ENCODE measurements at regions of chr10 and their contacts with region 1.

Region 1: GRCh38 chr10:6580279-6581029 is 378 bp upstream of the PRKCQ start:
- DNase-seq: peak; percentile 88
- H3K4me3 Mint-ChIP-seq: peak overlapping the region; percentile 94
- H3K27ac Mint-ChIP-seq: peak overlapping the region; percentile 98
- H3K4me1 Mint-ChIP-seq: peaks cover 42% of the 10 kb centered on the region
- H3K27me3 Mint-ChIP-seq: no peaks in the 10 kb centered on the region

Region 2: GRCh38 chr10:6487920-6488319 is 92.5 kb before region 1 on chr10:
- CTCF ChIA-PET with region 1: no interaction called
- DNase-seq: no peak
- H3K4me3 Mint-ChIP-seq: no peak overlapping the region
- H3K27ac Mint-ChIP-seq: no peak overlapping the region
- H3K4me1 Mint-ChIP-seq: peaks cover 67% of the 10 kb centered on the region
- H3K27me3 Mint-ChIP-seq: no peaks in the 10 kb centered on the region

Region 3: DNA sequence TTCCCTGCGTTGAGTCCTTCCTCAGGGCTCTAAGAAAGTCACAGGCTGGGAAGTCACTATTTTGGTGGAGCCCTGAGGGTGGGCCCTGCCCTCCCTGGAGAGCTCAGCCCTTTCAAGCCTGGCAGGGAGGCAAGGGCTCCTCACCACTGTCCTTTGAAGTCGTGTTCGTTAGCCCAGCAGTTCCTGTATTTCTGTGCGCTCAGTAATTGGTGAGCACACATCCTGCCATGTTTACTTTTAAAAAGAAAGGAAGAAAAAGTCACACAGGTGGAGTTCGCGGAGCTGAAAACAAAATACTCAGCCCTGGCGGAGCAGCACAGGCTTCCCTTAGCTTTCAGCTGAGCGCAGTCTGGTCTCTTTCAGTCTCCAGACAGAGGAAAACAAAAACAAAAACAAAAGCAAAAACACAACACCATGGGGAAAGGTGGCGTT is 37.4 kb before region 1 on chr10:
- CTCF ChIA-PET with region 1: interaction called, 10 read pairs
- DNase-seq: peak; percentile 78
- H3K4me3 Mint-ChIP-seq: peak overlapping the region; percentile 77
- H3K27ac Mint-ChIP-seq: peak overlapping the region; percentile 100
- H3K4me1 Mint-ChIP-seq: peaks cover 81% of the 10 kb centered on the region
- H3K27me3 Mint-ChIP-seq: no peaks in the 10 kb centered on the region

Region 4: DNA sequence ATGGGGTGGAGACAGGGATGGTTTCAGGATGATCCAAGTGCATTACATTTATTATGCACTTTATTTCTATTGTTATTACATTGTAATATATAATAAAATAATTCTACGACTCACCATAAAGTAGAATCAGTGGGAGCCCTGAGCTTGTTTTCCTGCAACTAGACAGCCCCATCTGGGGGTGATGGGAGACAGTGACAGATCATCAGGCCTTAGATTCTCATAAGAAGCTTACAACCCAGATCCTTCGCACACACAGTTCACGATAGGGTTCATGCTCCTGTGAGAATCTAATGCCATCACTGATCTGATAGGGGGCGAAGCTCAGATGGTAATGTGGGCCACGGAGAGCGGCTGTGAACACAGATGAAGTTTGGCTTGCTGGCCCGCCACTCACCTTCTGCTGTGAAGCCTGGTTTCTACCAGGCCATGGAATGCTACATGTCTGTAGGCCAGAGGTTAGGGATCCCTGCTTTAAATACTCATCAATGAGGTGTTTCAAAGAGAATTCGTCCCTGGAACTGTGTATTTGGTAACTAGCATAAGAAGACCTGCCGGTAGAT is 20.9 kb after region 1 on chr10:
- CTCF ChIA-PET with region 1: interaction called, 37 read pairs
- DNase-seq: peak; percentile 59
- H3K4me3 Mint-ChIP-seq: peak overlapping the region; percentile 51
- H3K27ac Mint-ChIP-seq: peak overlapping the region; percentile 92
- H3K4me1 Mint-ChIP-seq: peaks cover 90% of the 10 kb centered on the region
- H3K27me3 Mint-ChIP-seq: no peaks in the 10 kb centered on the region

Region 5: DNA sequence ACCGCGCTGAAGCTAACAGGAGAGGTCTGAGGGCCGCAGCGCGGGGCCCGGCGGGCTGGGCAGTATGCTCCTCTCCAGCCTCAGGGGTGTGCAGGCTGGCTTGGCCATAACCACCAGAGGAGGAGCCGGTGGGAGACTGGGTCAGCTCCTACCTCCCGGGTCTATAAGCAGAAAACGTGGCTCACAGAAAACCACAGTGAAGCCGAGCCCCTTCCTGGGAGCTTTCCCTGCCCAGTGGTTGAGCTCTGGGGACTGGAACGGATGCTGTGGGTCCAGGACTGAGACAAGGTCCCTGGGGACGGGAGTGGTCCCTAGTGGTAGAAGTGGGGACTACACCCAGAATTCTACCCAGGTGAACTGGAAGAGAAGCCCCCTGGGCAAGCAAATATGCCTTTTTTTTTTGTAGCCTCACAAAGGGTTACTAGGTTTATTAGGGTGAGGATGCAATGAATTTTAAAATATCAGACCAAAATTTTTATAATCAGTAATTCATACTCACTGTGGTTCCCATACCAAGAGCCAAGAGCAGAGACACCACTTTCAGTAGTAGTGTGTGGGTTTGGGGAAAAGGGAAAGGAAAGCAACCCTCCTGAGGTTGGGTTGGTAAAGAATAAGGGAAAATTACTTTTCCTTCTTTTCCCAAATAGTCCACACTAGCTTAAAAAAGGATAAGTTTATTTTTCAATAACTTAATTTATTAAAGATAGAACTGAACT is 67.5 kb after region 1 on chr10:
- CTCF ChIA-PET with region 1: interaction called, 53 read pairs
- DNase-seq: peak; percentile 81
- H3K4me3 Mint-ChIP-seq: no peak overlapping the region
- H3K27ac Mint-ChIP-seq: no peak overlapping the region
- H3K4me1 Mint-ChIP-seq: peaks cover 45% of the 10 kb centered on the region
- H3K27me3 Mint-ChIP-seq: peaks cover 6% of the 10 kb centered on the region

Measured in activated naive CD4-positive, alpha-beta T cell treated with anti-CD3 and anti-CD28 coated beads, Interleukin-2, amount 10 ng/mL, durations not matched to agents 7 days and 5 days (primary cell).